ENCODE measurements at regions of chr6 and their contacts with region 1.

Region 1: DNA sequence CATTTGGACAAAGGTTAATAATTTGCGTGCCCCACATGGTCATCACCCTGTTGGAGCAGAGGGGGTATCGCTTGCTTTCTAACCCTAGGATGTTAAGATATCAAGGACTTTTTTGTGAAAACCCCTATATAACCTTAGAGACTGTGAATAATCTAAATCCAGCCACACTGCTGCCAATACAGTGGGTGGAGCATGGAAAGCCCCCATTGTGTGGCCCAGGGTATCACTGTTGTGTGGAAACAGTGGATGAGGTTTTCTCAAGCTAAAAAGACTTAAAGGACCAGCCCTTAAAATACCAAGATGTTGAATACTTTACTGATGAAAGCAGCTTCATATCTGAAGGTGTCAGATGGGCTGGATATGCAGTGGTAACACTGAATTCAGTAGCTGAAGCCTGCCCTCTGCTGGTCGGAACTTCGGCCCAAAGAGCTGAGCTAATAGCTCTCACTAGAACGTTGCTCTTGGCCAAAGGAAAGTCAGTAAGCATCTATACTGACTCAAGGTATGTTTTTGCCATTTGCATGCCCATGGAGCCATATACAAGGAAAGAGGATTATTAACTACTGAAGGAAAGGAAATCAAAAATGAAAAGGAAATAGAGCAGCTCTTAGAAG is 695.2 kb downstream of the PHF3 start:
- DNase-seq: peak; percentile 56 to 81 (median 75)
- H3K4me3 ChIP-seq: no peak overlapping the region
- H3K27ac ChIP-seq: no peak overlapping the region
- H3K4me1 ChIP-seq: peaks cover 0 to 3% (median 0%) of the 10 kb centered on the region in 4 experiments
- H3K27me3 ChIP-seq: no peaks in the 10 kb centered on the region

Region 2: DNA sequence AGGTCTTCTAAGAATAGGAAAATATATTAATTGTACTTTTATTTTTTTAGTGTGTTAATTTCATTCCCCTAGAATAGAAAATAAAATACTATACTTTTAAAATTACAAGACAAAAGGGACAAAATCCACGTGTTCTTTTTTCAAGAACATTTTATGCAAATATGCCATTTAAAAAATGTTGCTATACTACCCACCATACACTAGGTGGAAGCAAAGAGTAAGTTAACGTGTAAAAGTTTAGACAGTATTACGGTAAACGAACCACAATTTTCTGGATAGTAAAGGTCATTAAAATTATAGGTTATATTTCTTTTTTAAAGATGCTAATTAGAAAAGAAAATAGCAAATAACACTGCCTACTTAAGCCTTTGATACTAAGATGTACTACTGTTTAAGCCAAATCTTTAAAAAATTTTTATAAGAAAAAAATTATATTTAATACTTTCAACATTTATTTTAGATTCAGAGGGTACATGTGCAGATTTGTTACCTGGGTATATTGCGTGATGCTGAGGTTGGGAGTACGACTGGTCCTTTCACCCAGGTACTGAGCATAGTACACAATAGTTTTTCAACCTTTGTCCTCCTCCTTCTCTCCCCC is 407.6 kb before region 1 on chr6:
- CTCF ChIA-PET with region 1: interaction called, 39 read pairs
- POLR2A ChIA-PET with region 1: no interaction called
- DNase-seq: peak; percentile 39 to 70 (median 64)
- H3K4me3 ChIP-seq: no peak overlapping the region
- H3K27ac ChIP-seq: no peak overlapping the region
- H3K4me1 ChIP-seq: peaks cover 0 to 17% (median 7%) of the 10 kb centered on the region in 4 experiments
- H3K27me3 ChIP-seq: no peaks in the 10 kb centered on the region

Region 3: GRCh38 chr6:64280569-64280968 is 50.2 kb before region 1 on chr6:
- CTCF ChIA-PET with region 1: interaction called, 11 read pairs
- POLR2A ChIA-PET with region 1: no interaction called
- DNase-seq: peak; percentile 39 to 60 (median 57)
- H3K4me3 ChIP-seq: no peak overlapping the region
- H3K27ac ChIP-seq: no peak overlapping the region
- H3K4me1 ChIP-seq: no peaks in the 10 kb centered on the region
- H3K27me3 ChIP-seq: no peaks in the 10 kb centered on the region

Measured in common myeloid progenitor, CD34-positive (primary cell).